CD4-positive, alpha-beta memory T cell (primary cell): ENCODE measurements at regions of chr6 and their contacts with region 1.

Region 1: DNA sequence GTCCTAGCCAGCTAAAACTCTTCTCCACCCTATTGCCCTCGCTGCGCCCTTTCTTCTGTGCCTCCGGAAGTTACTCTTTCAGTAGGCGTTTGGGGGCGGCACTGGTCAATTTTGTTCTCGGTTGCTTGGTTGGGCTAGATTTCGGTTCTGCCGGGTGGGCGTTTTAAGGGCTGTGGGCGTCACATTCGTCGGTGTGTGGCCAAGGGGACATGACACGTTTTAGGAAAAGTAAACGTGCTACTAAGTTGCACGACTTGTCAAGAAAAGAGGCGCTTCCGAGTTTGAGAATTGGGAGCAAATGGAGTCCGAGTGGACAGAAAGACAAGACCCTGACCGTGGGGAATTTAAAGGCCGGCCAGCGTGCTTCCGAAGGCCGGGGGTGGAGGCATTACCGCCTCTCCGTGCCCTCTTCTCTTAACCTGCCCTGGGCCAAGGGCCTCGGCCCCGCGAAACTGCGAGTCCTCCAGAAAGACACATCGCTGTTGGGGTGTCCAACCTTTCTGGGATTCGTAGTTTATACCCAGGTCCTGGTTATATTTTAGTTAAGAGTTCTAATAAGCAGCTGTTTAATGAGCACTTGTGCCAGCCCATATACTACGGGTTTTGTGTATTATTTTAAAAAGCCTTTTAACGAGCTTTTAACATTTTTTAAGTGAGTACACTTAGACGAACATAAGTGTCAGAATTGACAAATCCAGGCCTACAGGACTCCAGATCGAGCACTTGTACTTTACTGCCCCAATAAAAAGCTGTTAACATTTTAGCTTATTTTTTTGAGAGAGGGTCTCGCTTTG is 661 bp upstream of the BAG6 start:
- DNase-seq: peak in 1 of 5 donors; percentile 93
- H3K4me3 ChIP-seq: peak overlapping the region; percentile 85 to 92
- H3K4me3 Mint-ChIP-seq: peak overlapping the region; percentile 96 to 100 (median 98)
- H3K27ac ChIP-seq: peak overlapping the region; percentile 93
- H3K27ac Mint-ChIP-seq: peak overlapping the region; percentile 99 to 100 (median 100)
- H3K4me1 ChIP-seq: peaks cover 33% of the 10 kb centered on the region
- H3K4me1 Mint-ChIP-seq: peaks cover 35 to 72% (median 46%) of the 10 kb centered on the region in 4 donors
- H3K27me3 ChIP-seq: no peaks in the 10 kb centered on the region
- H3K27me3 Mint-ChIP-seq: no peaks in the 10 kb centered on the region

Region 2: GRCh38 chr6:31541658-31542521 is 111.2 kb before region 1 on chr6 and contains the start of gene DDX39B:
- CTCF ChIA-PET with region 1: interaction called, 4 read pairs
- POLR2A ChIA-PET with region 1: interaction called, 24 read pairs
- intact Hi-C with region 1: loop called (anchors 1 kb)
- DNase-seq: peak; percentile 95 to 97 (median 96)
- H3K4me3 ChIP-seq: peak within 1 kb of the TSS; percentile 96 to 97
- H3K4me3 Mint-ChIP-seq: peak within 1 kb of the TSS; percentile 96 to 99 (median 98)
- H3K27ac ChIP-seq: peak within 1 kb of the TSS; percentile 94
- H3K27ac Mint-ChIP-seq: peak within 1 kb of the TSS; percentile 94 to 100 (median 99)
- H3K4me1 ChIP-seq: peaks cover 48% of the 10 kb centered on the region
- H3K4me1 Mint-ChIP-seq: peaks cover 38 to 63% (median 51%) of the 10 kb centered on the region in 4 donors
- H3K27me3 ChIP-seq: no peaks in the 10 kb centered on the region
- H3K27me3 Mint-ChIP-seq: no peaks in the 10 kb centered on the region
- total RNA-seq, gene DDX39B: 729 to 737 TPM

Region 3: DNA sequence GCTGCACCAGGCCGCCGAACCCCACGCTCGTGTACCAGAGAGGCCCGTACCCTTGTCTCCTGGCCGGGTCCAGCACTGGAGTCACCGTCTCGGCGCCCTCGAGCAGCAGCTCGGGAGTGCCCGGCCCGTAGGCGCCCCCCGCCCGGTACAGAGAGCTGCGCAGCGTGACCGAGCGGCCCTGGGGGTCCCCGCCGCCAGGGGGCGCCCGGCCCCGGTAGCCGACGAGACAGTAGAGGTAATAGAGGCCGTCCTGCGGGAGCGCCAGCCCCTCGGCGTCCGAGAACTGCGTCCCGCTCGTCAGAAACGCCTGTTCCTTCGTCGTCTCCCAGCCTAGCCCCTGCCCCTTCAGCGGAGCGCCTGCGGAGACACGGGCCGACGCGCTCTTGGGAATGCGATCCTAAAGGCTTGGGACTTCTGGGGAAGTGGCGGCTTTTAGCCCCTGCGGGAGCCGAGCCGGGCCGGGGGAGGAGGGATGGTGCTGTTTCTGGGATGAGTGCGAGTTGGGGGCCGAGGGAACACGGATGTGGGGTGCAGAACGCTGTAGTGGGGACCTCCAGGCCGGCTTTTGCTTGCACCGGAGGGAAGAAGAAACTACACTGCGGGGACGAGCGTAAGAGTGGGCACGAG is 72.2 kb before region 1 on chr6:
- CTCF ChIA-PET with region 1: no interaction called
- POLR2A ChIA-PET with region 1: interaction called, 45 read pairs
- intact Hi-C with region 1: loop called (anchors 5 kb)
- DNase-seq: peak; percentile 83 to 89 (median 85)
- H3K4me3 ChIP-seq: peak overlapping the region; percentile 89 to 95
- H3K4me3 Mint-ChIP-seq: peak overlapping the region; percentile 95 to 100 (median 99)
- H3K27ac ChIP-seq: peak overlapping the region; percentile 92
- H3K27ac Mint-ChIP-seq: peak overlapping the region; percentile 96 to 100 (median 99)
- H3K4me1 ChIP-seq: peaks cover 71% of the 10 kb centered on the region
- H3K4me1 Mint-ChIP-seq: peaks cover 32 to 95% (median 53%) of the 10 kb centered on the region in 4 donors
- H3K27me3 ChIP-seq: no peaks in the 10 kb centered on the region
- H3K27me3 Mint-ChIP-seq: no peaks in the 10 kb centered on the region

Region 4: DNA sequence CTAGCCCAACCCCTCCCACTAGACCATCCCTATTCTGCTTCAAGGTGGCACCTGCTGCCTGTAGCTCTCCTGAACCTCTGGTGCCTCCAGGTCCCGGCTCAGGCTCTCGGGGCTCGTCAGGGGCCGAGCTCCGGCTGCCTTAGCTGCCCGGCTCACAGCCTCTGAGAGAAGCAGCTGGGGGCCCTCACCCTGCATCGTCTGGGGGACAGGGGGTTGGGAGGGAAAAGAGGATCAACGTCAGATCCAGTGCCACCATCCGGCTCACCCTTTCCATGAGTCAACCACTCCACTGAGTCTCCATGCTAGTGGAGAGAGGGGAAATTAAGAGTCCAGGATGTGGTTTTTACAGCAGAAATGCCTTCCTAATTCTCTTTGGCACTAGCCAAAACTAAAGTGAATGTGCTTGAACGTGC is 13.7 kb before region 1 on chr6:
- CTCF ChIA-PET with region 1: interaction called, 3 read pairs
- POLR2A ChIA-PET with region 1: interaction called, 23 read pairs
- intact Hi-C with region 1: no loop called
- DNase-seq: no peak
- H3K4me3 ChIP-seq: no peak overlapping the region
- H3K4me3 Mint-ChIP-seq: no peak overlapping the region
- H3K27ac ChIP-seq: no peak overlapping the region
- H3K27ac Mint-ChIP-seq: peak overlapping the region in 3 of 7 donors; percentile 6 to 53 (median 36)
- H3K4me1 ChIP-seq: no peaks in the 10 kb centered on the region
- H3K4me1 Mint-ChIP-seq: peaks cover 0 to 5% (median 2%) of the 10 kb centered on the region in 4 donors
- H3K27me3 ChIP-seq: no peaks in the 10 kb centered on the region
- H3K27me3 Mint-ChIP-seq: no peaks in the 10 kb centered on the region

Region 5: DNA sequence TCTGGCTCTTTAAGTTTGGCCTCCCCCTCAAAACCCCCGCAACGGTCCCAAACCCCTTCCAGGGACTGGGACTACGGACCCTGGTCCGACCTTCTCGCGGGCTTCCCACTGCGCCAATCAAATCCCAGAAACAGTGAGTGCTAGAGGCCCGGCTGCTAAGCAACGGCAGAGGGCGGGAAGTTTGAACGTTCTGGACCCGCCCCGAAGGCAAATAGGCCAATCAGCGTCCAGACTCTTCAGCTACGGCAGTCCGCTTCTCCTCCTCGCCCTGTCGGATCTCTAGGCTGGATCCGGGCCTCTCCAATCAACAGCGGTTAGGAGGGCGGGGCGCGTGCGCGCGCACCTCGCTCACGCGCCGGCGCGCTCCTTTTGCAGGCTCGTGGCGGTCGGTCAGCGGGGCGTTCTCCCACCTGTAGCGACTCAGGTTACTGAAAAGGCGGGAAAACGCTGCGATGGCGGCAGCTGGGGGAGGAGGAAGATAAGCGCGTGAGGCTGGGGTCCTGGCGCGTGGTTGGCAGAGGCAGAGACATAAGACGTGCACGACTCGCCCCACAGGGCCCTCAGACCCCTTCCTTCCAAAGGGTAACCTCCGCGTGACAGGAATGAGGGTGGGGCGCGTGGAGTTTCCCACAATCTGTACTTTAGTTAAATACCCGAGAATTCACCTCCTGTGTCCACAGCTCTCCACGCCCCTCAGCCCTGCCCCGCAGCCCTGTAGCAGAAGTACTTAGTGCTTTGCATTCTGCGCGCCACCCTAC is 86.7 kb after region 1 on chr6 and contains the start of gene MSH5:
- CTCF ChIA-PET with region 1: no interaction called
- POLR2A ChIA-PET with region 1: interaction called, 22 read pairs
- intact Hi-C with region 1: loop called (anchors 1 kb)
- DNase-seq: peak; percentile 92 to 97 (median 94)
- H3K4me3 ChIP-seq: peak within 1 kb of the TSS; percentile 82
- H3K4me3 Mint-ChIP-seq: peak within 1 kb of the TSS; percentile 89 to 99 (median 98)
- H3K27ac ChIP-seq: peak within 1 kb of the TSS; percentile 64
- H3K27ac Mint-ChIP-seq: peak within 1 kb of the TSS; percentile 94 to 97 (median 95)
- H3K4me1 ChIP-seq: peaks cover 42% of the 10 kb centered on the region
- H3K4me1 Mint-ChIP-seq: peaks cover 33 to 64% (median 51%) of the 10 kb centered on the region in 4 donors
- H3K27me3 ChIP-seq: no peaks in the 10 kb centered on the region
- H3K27me3 Mint-ChIP-seq: no peaks in the 10 kb centered on the region
- total RNA-seq, gene MSH5: 11.4 to 12.1 TPM

Region 6: GRCh38 chr6:31827286-31828079 is 174.4 kb after region 1 on chr6 and contains the start of gene HSPA1B:
- CTCF ChIA-PET with region 1: interaction called, 4 read pairs
- POLR2A ChIA-PET with region 1: interaction called, 31 read pairs
- intact Hi-C with region 1: no loop called
- DNase-seq: peak; percentile 86 to 89 (median 87)
- H3K4me3 ChIP-seq: peak within 1 kb of the TSS; percentile 67 to 90
- H3K4me3 Mint-ChIP-seq: peak within 1 kb of the TSS; percentile 88 to 98 (median 95)
- H3K27ac ChIP-seq: peak within 1 kb of the TSS; percentile 83
- H3K27ac Mint-ChIP-seq: peak within 1 kb of the TSS; percentile 93 to 99 (median 96)
- H3K4me1 ChIP-seq: peaks cover 45% of the 10 kb centered on the region
- H3K4me1 Mint-ChIP-seq: peaks cover 18 to 55% (median 37%) of the 10 kb centered on the region in 4 donors
- H3K27me3 ChIP-seq: no peaks in the 10 kb centered on the region
- H3K27me3 Mint-ChIP-seq: no peaks in the 10 kb centered on the region
- total RNA-seq, gene HSPA1B: 58.0 to 60.8 TPM

Region 7: GRCh38 chr6:31901953-31902643 is 249.0 kb after region 1 on chr6 and contains the start of gene ZBTB12:
- CTCF ChIA-PET with region 1: no interaction called
- POLR2A ChIA-PET with region 1: interaction called, 13 read pairs
- intact Hi-C with region 1: loop called (anchors 1 kb)
- DNase-seq: peak; percentile 83 to 87 (median 86)
- H3K4me3 ChIP-seq: peak within 1 kb of the TSS; percentile 49 to 78
- H3K4me3 Mint-ChIP-seq: peak within 1 kb of the TSS; percentile 78 to 92 (median 90)
- H3K27ac ChIP-seq: peak within 1 kb of the TSS; percentile 58
- H3K27ac Mint-ChIP-seq: peak within 1 kb of the TSS; percentile 71 to 95 (median 89)
- H3K4me1 ChIP-seq: peaks cover 30% of the 10 kb centered on the region
- H3K4me1 Mint-ChIP-seq: peaks cover 17 to 36% (median 27%) of the 10 kb centered on the region in 4 donors
- H3K27me3 ChIP-seq: no peaks in the 10 kb centered on the region
- H3K27me3 Mint-ChIP-seq: peaks cover 0 to 1% of the 10 kb centered on the region in 2 donors
- total RNA-seq, gene ZBTB12: 2.4 to 2.5 TPM